Posterior vena cava (tissue), 2 donors: ENCODE measurements at regions of chr4 and their contacts with region 1.

Region 1: GRCh38 chr4:185754961-185755360 is 57.0 kb downstream of the SORBS2 start:
- DNase-seq: no peak

Region 2: GRCh38 chr4:185782523-185782922 is 27.6 kb after region 1 on chr4:
- intact Hi-C with region 1: no loop called
- DNase-seq: no peak

Region 3: GRCh38 chr4:185811509-185812364 is 56.8 kb after region 1 on chr4 and contains the start of gene SORBS2:
- intact Hi-C with region 1: loop called in 1 of 2 experiments (anchors 2 kb)
- DNase-seq: no peak
- total RNA-seq, gene SORBS2: 139 to 166 TPM